Naive thymus-derived CD4-positive, alpha-beta T cell (primary cell): ENCODE measurements at regions of chr2 and their contacts with region 1.

Region 1: GRCh38 chr2:49286726-49287125 is 132.4 kb upstream of the FSHR start:
- DNase-seq: no peak
- ATAC-seq: no peak
- H3K4me3 ChIP-seq: no peak overlapping the region
- H3K4me3 Mint-ChIP-seq: no peak overlapping the region
- H3K27ac ChIP-seq: no peak overlapping the region
- H3K27ac Mint-ChIP-seq: no peak overlapping the region
- H3K4me1 ChIP-seq: no peaks in the 10 kb centered on the region
- H3K4me1 Mint-ChIP-seq: no peaks in the 10 kb centered on the region
- H3K27me3 ChIP-seq: no peaks in the 10 kb centered on the region
- H3K27me3 Mint-ChIP-seq: no peaks in the 10 kb centered on the region

Region 2: DNA sequence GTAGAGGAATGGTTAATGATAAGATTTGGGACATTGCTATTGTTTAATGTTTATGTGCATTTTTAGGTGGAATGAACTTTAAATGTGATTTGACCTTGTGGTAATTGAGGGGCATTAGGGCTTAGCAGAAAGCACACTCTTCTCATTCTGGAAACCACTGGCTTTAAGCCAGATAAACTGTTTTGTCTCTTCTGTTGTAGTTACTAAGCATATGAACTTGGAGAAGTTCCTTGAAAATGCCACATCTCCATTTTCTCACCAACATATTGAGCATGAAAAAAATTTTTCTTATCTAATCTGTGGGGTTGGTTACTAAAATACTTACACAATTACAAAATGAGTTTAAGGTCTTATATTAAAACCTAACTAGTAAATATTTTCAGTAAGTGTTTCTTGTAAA is 61.6 kb before region 1 on chr2:
- CTCF ChIA-PET with region 1: no interaction called
- POLR2A ChIA-PET with region 1: no interaction called
- intact Hi-C with region 1: no loop called
- DNase-seq: no peak
- ATAC-seq: no peak
- H3K4me3 ChIP-seq: no peak overlapping the region
- H3K4me3 Mint-ChIP-seq: no peak overlapping the region
- H3K27ac ChIP-seq: no peak overlapping the region
- H3K27ac Mint-ChIP-seq: no peak overlapping the region
- H3K4me1 ChIP-seq: no peaks in the 10 kb centered on the region
- H3K4me1 Mint-ChIP-seq: no peaks in the 10 kb centered on the region
- H3K27me3 ChIP-seq: no peaks in the 10 kb centered on the region
- H3K27me3 Mint-ChIP-seq: no peaks in the 10 kb centered on the region

Region 3: GRCh38 chr2:49306925-49307324 is 20.2 kb after region 1 on chr2:
- CTCF ChIA-PET with region 1: no interaction called
- POLR2A ChIA-PET with region 1: no interaction called
- intact Hi-C with region 1: loop called in 1 of 2 experiments (anchors 1 kb)
- DNase-seq: no peak
- ATAC-seq: no peak
- H3K4me3 ChIP-seq: no peak overlapping the region
- H3K4me3 Mint-ChIP-seq: no peak overlapping the region
- H3K27ac ChIP-seq: no peak overlapping the region
- H3K27ac Mint-ChIP-seq: no peak overlapping the region
- H3K4me1 ChIP-seq: no peaks in the 10 kb centered on the region
- H3K4me1 Mint-ChIP-seq: no peaks in the 10 kb centered on the region
- H3K27me3 ChIP-seq: no peaks in the 10 kb centered on the region
- H3K27me3 Mint-ChIP-seq: no peaks in the 10 kb centered on the region

Region 4: GRCh38 chr2:49598231-49598630 is 311.5 kb after region 1 on chr2:
- CTCF ChIA-PET with region 1: no interaction called
- POLR2A ChIA-PET with region 1: no interaction called
- intact Hi-C with region 1: no loop called
- DNase-seq: no peak
- ATAC-seq: no peak
- H3K4me3 ChIP-seq: no peak overlapping the region
- H3K4me3 Mint-ChIP-seq: no peak overlapping the region
- H3K27ac ChIP-seq: no peak overlapping the region
- H3K27ac Mint-ChIP-seq: no peak overlapping the region
- H3K4me1 ChIP-seq: no peaks in the 10 kb centered on the region
- H3K4me1 Mint-ChIP-seq: no peaks in the 10 kb centered on the region
- H3K27me3 ChIP-seq: no peaks in the 10 kb centered on the region
- H3K27me3 Mint-ChIP-seq: no peaks in the 10 kb centered on the region